Mammary epithelial cell (primary cell): ENCODE measurements at regions of chr12 and their contacts with region 1.

Region 1: GRCh38 chr12:102119674-102120563 is at the starts of genes NUP37 and PARPBP:
- DNase-seq: peak; percentile 93
- H3K4me3 ChIP-seq: peak within 1 kb of the TSS; percentile 76 to 91 (median 85)
- H3K27ac ChIP-seq: peak within 1 kb of the TSS; percentile 94
- H3K4me1 ChIP-seq: peaks cover 14% of the 10 kb centered on the region
- H3K27me3 ChIP-seq: no peaks in the 10 kb centered on the region
- CTCF ChIP-seq: peak in 1 of 2 donors; percentile 29
- total RNA-seq, gene NUP37: 18.8 to 47.4 TPM
- total RNA-seq, gene PARPBP: 3.8 to 10.2 TPM

Region 2: GRCh38 chr12:101982307-101982706 is 137.6 kb before region 1 on chr12:
- CTCF ChIA-PET with region 1: no interaction called
- dilution Hi-C with region 1: no loop called
- in situ Hi-C with region 1: no loop called
- intact Hi-C with region 1: no loop called
- DNase-seq: no peak
- H3K4me3 ChIP-seq: no peak overlapping the region
- H3K27ac ChIP-seq: no peak overlapping the region
- H3K4me1 ChIP-seq: no peaks in the 10 kb centered on the region
- H3K27me3 ChIP-seq: peaks cover 1% of the 10 kb centered on the region
- CTCF ChIP-seq: no peak

Region 3: GRCh38 chr12:102010265-102010994 is 109.5 kb before region 1 on chr12:
- CTCF ChIA-PET with region 1: no interaction called
- dilution Hi-C with region 1: no loop called
- in situ Hi-C with region 1: no loop called
- intact Hi-C with region 1: no loop called
- DNase-seq: no peak
- H3K4me3 ChIP-seq: no peak overlapping the region
- H3K27ac ChIP-seq: no peak overlapping the region
- H3K4me1 ChIP-seq: no peaks in the 10 kb centered on the region
- H3K27me3 ChIP-seq: no peaks in the 10 kb centered on the region
- CTCF ChIP-seq: no peak

Region 4: DNA sequence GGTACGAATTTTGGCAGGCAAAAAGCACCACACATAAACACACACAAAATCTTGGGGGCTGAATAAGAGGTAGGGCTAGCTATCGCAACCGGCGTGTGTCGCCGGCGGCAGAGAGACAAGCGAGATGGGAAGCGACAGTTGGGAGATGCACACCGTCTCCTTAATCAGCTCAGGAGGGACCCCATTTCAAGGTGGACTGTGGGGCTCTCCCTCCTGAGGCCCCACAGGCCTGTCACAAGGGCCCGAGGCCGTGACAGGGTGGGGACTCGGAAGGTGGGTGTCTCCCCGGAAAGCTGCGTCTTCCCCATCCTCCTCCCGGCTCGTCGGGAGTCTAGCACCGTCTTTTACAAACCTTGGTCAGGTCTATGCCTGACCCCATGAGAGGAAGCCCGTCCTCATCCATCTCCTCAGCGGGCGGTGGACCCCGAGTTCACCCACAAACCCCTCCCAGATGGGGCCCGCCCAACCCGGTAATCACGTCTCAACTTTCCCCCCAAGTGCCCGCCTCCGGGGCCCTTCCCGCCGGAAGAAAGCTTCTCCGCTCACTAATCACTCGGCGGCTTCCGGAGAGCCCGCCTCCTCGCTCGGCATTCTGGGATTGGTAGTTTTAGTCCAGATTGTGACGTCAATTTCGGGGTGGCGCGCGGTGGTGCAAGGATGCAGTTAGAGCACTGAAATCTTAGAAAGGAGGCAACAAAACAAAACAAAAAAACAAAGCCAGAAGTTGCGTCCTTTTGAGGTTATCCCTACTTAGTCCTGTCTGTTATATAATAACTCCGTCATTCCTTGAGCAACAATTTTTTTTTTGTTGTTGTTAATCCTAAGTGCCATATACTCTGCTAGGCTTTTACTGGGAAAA is 58.1 kb before region 1 on chr12 and contains the start of gene WASHC3:
- CTCF ChIA-PET with region 1: no interaction called
- dilution Hi-C with region 1: no loop called
- in situ Hi-C with region 1: no loop called
- intact Hi-C with region 1: loop called (anchors 2 kb)
- DNase-seq: peak; percentile 90
- H3K4me3 ChIP-seq: peak within 1 kb of the TSS; percentile 68 to 97 (median 74)
- H3K27ac ChIP-seq: peak within 1 kb of the TSS; percentile 68
- H3K4me1 ChIP-seq: peaks cover 4% of the 10 kb centered on the region
- H3K27me3 ChIP-seq: no peaks in the 10 kb centered on the region
- CTCF ChIP-seq: no peak
- total RNA-seq, gene WASHC3: 48.9 to 61.2 TPM

Region 5: GRCh38 chr12:102201436-102202061 is 81.6 kb after region 1 on chr12:
- CTCF ChIA-PET with region 1: no interaction called
- dilution Hi-C with region 1: loop called (anchors 5 kb)
- in situ Hi-C with region 1: no loop called
- intact Hi-C with region 1: no loop called
- DNase-seq: no peak
- H3K4me3 ChIP-seq: no peak overlapping the region
- H3K27ac ChIP-seq: no peak overlapping the region
- H3K4me1 ChIP-seq: no peaks in the 10 kb centered on the region
- H3K27me3 ChIP-seq: no peaks in the 10 kb centered on the region
- CTCF ChIP-seq: no peak